ENCODE measurements at regions of chr13 and their contacts with region 1.

Region 1: GRCh38 chr13:52968074-52968700 is 60.4 kb upstream of the OLFM4 start:
- DNase-seq: peak; percentile 74 to 89 (median 84)
- ATAC-seq: peak; percentile 92 to 99 (median 97)
- H3K4me3 ChIP-seq: no peak overlapping the region
- H3K27ac ChIP-seq: no peak overlapping the region
- H3K4me1 ChIP-seq: peaks cover 0 to 8% (median 0%) of the 10 kb centered on the region in 3 donors
- H3K27me3 ChIP-seq: no peaks in the 10 kb centered on the region
- CTCF ChIP-seq: peak; percentile 85 to 94 (median 86)

Region 2: GRCh38 chr13:52850396-52851136 is 117.6 kb before region 1 on chr13:
- intact Hi-C with region 1: loop called in 1 of 3 experiments (anchors 10 kb)
- DNase-seq: peak; percentile 63 to 89 (median 78)
- ATAC-seq: peak; percentile 90 to 91 (median 90)
- H3K4me3 ChIP-seq: peak overlapping the region; percentile 40 to 70 (median 58)
- H3K27ac ChIP-seq: peak overlapping the region; percentile 32 to 61 (median 41)
- H3K4me1 ChIP-seq: peaks cover 0 to 7% (median 0%) of the 10 kb centered on the region in 3 donors
- H3K27me3 ChIP-seq: peaks cover 12 to 37% (median 19%) of the 10 kb centered on the region in 4 donors
- CTCF ChIP-seq: no peak